Aorta (tissue), 5 donors: ENCODE measurements at regions of chr6 and their contacts with region 1.

Region 1: GRCh38 chr6:110528101-110528929 is 51.9 kb upstream of the SLC22A16 start:
- DNase-seq: no peak
- ATAC-seq: peak; percentile 89
- H3K4me3 ChIP-seq: no peak overlapping the region
- H3K27ac ChIP-seq: no peak overlapping the region
- H3K4me1 ChIP-seq: no peaks in the 10 kb centered on the region
- H3K27me3 ChIP-seq: no peaks in the 10 kb centered on the region

Region 2: GRCh38 chr6:110949679-110950285 is 421.5 kb after region 1 on chr6:
- intact Hi-C with region 1: loop called (anchors 2 to 5 kb)
- DNase-seq: no peak
- ATAC-seq: no peak
- H3K4me3 ChIP-seq: no peak overlapping the region
- H3K27ac ChIP-seq: no peak overlapping the region
- H3K4me1 ChIP-seq: no peaks in the 10 kb centered on the region
- H3K27me3 ChIP-seq: no peaks in the 10 kb centered on the region